K562 (cell line): ENCODE measurements at regions of chr2 and their contacts with region 1.

Region 1: GRCh38 chr2:170928824-170929685 is at the start of gene GORASP2:
- DNase-seq: peak; percentile 98 to 100 (median 98)
- ATAC-seq: peak; percentile 94
- H3K4me3 ChIP-seq: peak within 1 kb of the TSS; percentile 81
- H3K27ac ChIP-seq: peak within 1 kb of the TSS; percentile 95
- H3K4me1 ChIP-seq: peaks cover 13 to 26% of the 10 kb centered on the region in 2 experiments; a peak in 4 of 5 replicates
- H3K27me3 ChIP-seq: no peaks in the 10 kb centered on the region
- CTCF ChIP-seq: peak in 2 of 3 experiments; percentile 93 to 99; a peak in 5 of 6 replicates
- EP300 ChIP-seq: peak; percentile 38
- POLR2A ChIP-seq: peak; percentile 96
- RAD21 ChIP-seq: peak; percentile 69 to 72
- polyA plus RNA-seq, gene GORASP2: 27.4 to 29.9 TPM

Region 2: DNA sequence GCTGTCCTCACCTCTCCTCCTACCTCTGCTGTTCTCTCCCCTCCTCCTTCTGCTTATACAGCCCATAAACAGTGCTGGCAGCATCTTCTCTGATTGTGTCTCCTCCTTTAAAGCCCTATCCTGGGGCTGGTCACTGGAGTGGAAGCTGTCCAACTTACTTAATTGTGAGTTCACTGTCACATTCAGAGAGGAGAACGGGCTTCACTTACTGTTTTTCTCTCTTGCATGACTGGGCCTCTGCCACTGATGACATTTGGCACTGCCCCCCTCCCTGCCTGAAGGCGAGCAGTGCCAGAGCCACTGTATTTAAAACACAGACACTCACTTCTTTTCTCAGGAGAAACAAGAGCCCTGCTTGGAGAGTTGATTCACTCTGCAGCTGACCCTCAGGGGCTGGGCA is 100.0 kb before region 1 on chr2:
- CTCF ChIA-PET with region 1: no interaction called
- POLR2A ChIA-PET with region 1: no interaction called
- in situ Hi-C with region 1: no loop called
- intact Hi-C with region 1: no loop called
- DNase-seq: no peak
- ATAC-seq: no peak
- H3K4me3 ChIP-seq: no peak overlapping the region
- H3K27ac ChIP-seq: no peak overlapping the region
- H3K4me1 ChIP-seq: peaks cover 0 to 7% of the 10 kb centered on the region in 2 experiments; a peak in 2 of 5 replicates
- H3K27me3 ChIP-seq: peaks cover 0 to 22% of the 10 kb centered on the region in 2 experiments; a peak in 2 of 5 replicates
- CTCF ChIP-seq: no peak
- EP300 ChIP-seq: no peak
- POLR2A ChIP-seq: no peak
- RAD21 ChIP-seq: no peak

Region 3: DNA sequence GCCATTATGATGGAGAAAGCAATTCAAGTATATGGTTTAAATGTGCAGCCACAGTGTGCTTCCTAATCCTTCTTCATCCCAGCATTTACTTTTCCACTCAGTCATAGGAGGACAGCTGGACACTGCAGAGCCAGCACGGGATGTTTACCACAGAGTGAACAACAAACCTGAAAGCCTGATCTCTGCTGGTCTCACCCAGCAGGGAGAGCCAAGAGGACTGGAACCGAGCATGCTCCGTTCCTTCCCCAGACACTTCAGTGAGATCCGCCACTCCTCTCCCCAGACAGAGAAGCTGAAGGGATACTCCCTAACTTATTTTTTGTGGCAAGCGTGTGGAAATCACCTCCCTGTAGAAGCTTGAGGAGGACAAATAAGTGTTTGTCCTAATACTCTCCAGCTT is 23.2 kb before region 1 on chr2:
- CTCF ChIA-PET with region 1: no interaction called
- POLR2A ChIA-PET with region 1: interaction called, 19 read pairs
- in situ Hi-C with region 1: no loop called
- intact Hi-C with region 1: no loop called
- DNase-seq: peak in 1 of 4 experiments; percentile 37
- ATAC-seq: peak; percentile 84
- H3K4me3 ChIP-seq: no peak overlapping the region
- H3K27ac ChIP-seq: no peak overlapping the region
- H3K4me1 ChIP-seq: no peaks in the 10 kb centered on the region
- H3K27me3 ChIP-seq: peaks cover 0 to 10% of the 10 kb centered on the region in 2 experiments; a peak in 1 of 5 replicates
- CTCF ChIP-seq: no peak
- EP300 ChIP-seq: no peak
- POLR2A ChIP-seq: no peak
- RAD21 ChIP-seq: no peak

Region 4: DNA sequence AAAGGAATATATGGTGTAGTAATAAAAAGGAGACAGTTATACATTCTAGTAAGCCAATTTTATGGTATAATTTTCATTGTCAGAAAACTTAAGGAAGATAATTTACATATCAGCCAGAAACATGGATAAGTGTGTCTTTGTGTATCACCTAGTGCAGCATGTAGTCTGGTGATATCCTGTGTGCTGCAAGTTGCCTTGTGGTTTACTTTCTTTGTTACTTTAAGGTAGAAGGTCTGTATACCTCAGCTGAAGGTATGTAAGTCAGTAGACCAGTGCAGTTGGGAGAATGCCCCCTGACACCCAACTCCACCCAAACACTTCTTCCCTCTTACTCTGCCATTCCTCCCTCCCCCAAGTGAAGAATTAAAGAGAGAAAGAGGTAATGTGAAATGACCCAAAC is 11.0 kb after region 1 on chr2:
- CTCF ChIA-PET with region 1: interaction called, 3 read pairs
- POLR2A ChIA-PET with region 1: interaction called, 28 read pairs
- in situ Hi-C with region 1: no loop called
- intact Hi-C with region 1: no loop called
- DNase-seq: no peak
- ATAC-seq: peak; percentile 36
- H3K4me3 ChIP-seq: no peak overlapping the region
- H3K27ac ChIP-seq: no peak overlapping the region
- H3K4me1 ChIP-seq: peaks cover 3% of the 10 kb centered on the region in 2 experiments; a peak in 3 of 5 replicates
- H3K27me3 ChIP-seq: no peaks in the 10 kb centered on the region
- CTCF ChIP-seq: no peak
- EP300 ChIP-seq: no peak
- POLR2A ChIP-seq: no peak
- RAD21 ChIP-seq: no peak

Region 5: GRCh38 chr2:171416009-171416926 is 487.2 kb after region 1 on chr2:
- CTCF ChIA-PET with region 1: no interaction called
- POLR2A ChIA-PET with region 1: interaction called, 5 read pairs
- in situ Hi-C with region 1: no loop called
- intact Hi-C with region 1: loop called (anchors 1 kb)
- DNase-seq: peak; percentile 44 to 90 (median 64)
- ATAC-seq: peak; percentile 99
- H3K4me3 ChIP-seq: no peak overlapping the region
- H3K27ac ChIP-seq: no peak overlapping the region
- H3K4me1 ChIP-seq: peaks cover 0 to 16% of the 10 kb centered on the region in 2 experiments; a peak in 3 of 5 replicates
- H3K27me3 ChIP-seq: no peaks in the 10 kb centered on the region
- CTCF ChIP-seq: peak; percentile 86 to 93 (median 92)
- EP300 ChIP-seq: 0 out of 2 replicates have a peak, but pooled peaks have one; percentile 17
- POLR2A ChIP-seq: no peak
- RAD21 ChIP-seq: peak; percentile 90 to 96

Region 6: GRCh38 chr2:171433763-171434670 is 505.0 kb after region 1 on chr2 and contains the starts of genes DCAF17 and METTL8:
- CTCF ChIA-PET with region 1: no interaction called
- POLR2A ChIA-PET with region 1: interaction called, 3 read pairs
- in situ Hi-C with region 1: no loop called
- intact Hi-C with region 1: loop called (anchors 1 kb)
- DNase-seq: peak; percentile 95 to 99 (median 96)
- ATAC-seq: peak; percentile 97
- H3K4me3 ChIP-seq: peak within 1 kb of the TSS; percentile 86
- H3K27ac ChIP-seq: peak within 1 kb of the TSS; percentile 94
- H3K4me1 ChIP-seq: peaks cover 13 to 18% of the 10 kb centered on the region in 2 experiments
- H3K27me3 ChIP-seq: no peaks in the 10 kb centered on the region
- CTCF ChIP-seq: peak; percentile 92 to 93 (median 92)
- EP300 ChIP-seq: peak; percentile 34; the same call in 1 of the 2 replicates
- POLR2A ChIP-seq: peak; percentile 96
- RAD21 ChIP-seq: peak; percentile 13 to 45; a peak in 3 of 4 replicates
- polyA plus RNA-seq, gene DCAF17: 10.0 to 12.0 TPM
- polyA plus RNA-seq, gene METTL8: 12.9 to 16.7 TPM